ENCODE measurements at regions of chr1 and their contacts with region 1.

Region 1: DNA sequence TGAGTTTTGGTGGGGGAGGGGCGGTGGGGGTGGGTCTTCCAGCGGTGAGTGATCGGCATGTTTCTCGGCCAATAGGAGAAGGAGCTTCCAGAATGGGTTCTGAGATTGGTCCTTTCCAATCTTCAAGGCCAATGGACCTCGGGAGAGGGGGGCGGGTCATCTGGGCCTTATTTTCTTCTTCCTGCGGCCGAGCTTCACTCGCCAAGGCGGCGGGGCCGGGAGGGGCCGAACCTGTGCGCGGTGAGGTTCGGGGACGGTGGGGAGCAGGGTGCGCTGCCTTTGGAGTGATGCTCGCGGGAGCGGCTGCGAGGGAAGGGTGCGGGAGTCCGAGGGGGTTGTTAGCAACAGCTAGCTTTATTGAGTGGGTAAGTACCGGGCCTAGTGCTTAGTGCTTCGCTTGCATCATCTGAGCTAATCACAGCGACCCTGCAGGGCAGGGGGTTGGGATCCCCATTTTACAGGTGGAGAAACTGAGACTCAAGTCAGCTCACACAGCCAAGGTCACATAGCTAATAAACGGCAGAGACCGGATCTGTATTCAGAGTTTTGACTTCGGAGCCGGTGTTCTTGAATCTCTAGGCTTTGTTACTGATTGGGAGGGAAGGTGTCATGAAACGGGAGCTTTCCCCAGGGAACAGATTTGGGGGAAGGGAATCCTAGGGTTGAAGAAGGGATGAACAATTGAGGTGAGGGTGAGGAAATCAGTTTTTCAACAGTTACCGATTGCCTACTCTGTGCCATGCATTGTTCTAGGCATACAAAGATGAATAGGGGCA is 549 bp downstream of the KDM4A start:
- DNase-seq: peak in 8 of 9 donors; percentile 70 to 93 (median 90)
- ATAC-seq: peak; percentile 83
- H3K4me3 ChIP-seq: peak overlapping the region; percentile 96
- H3K4me3 Mint-ChIP-seq: peak overlapping the region; percentile 93 to 99 (median 96)
- H3K27ac ChIP-seq: peak overlapping the region; percentile 86
- H3K27ac Mint-ChIP-seq: peak overlapping the region; percentile 85 to 98 (median 95)
- H3K4me1 ChIP-seq: peaks cover 10 to 16% of the 10 kb centered on the region in 2 donors
- H3K4me1 Mint-ChIP-seq: peaks cover 27 to 47% (median 37%) of the 10 kb centered on the region in 7 donors
- H3K27me3 ChIP-seq: no peaks in the 10 kb centered on the region
- H3K27me3 Mint-ChIP-seq: peaks cover 0 to 5% (median 0%) of the 10 kb centered on the region in 5 donors

Region 2: DNA sequence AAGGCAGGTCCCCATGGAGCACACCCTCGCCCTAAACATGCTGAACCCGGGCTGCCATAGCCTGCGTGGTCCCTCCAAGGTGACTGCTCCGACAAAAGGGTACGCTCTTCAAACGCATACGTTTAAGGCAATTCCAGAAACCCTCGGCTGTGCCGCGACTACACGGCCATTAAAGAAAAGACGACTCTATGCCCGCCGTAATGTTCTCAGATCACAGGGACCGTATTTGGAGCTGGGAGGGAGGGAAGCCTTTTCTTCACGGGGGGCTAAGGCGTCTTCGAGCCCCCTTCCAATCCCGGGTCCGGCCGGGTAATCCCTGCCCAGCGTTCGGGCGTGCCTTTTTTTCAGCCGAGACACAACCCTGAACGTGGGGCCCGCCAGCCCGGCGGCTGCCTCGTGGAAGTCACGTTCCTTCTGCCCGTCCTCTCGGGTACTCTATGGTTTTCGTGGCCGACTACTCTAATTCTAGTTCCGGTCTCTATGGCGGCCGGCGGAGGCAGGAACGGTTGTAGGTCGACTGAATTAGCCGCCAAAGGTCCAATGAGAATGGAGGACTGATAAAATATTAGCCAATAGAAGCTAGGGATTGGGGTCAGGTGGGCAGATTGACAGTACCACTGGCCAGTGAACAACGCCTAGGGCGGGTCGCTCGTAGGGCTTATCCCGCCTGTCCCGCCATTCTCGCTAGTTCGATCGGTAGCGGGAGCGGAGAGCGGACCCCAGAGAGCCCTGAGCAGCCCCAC is 968.6 kb before region 1 on chr1 and contains the start of gene YBX1:
- CTCF ChIA-PET with region 1: no interaction called
- POLR2A ChIA-PET with region 1: no interaction called
- intact Hi-C with region 1: loop called in 1 of 2 experiments (anchors 2 kb)
- DNase-seq: peak; percentile 85 to 98 (median 97)
- ATAC-seq: peak; percentile 94
- H3K4me3 ChIP-seq: peak within 1 kb of the TSS; percentile 74
- H3K4me3 Mint-ChIP-seq: peak within 1 kb of the TSS; percentile 95 to 99 (median 98)
- H3K27ac ChIP-seq: peak within 1 kb of the TSS; percentile 82
- H3K27ac Mint-ChIP-seq: peak within 1 kb of the TSS; percentile 93 to 98 (median 97)
- H3K4me1 ChIP-seq: peaks cover 35 to 47% of the 10 kb centered on the region in 2 donors
- H3K4me1 Mint-ChIP-seq: peaks cover 42 to 66% (median 54%) of the 10 kb centered on the region in 7 donors
- H3K27me3 ChIP-seq: no peaks in the 10 kb centered on the region
- H3K27me3 Mint-ChIP-seq: no peaks in the 10 kb centered on the region
- total RNA-seq, gene YBX1: 277 to 471 (median 287) TPM

Region 3: GRCh38 chr1:43389326-43390313 is 260.9 kb before region 1 on chr1 and contains the starts of genes MED8 and SZT2:
- CTCF ChIA-PET with region 1: no interaction called
- POLR2A ChIA-PET with region 1: no interaction called
- intact Hi-C with region 1: loop called (anchors 1 to 10 kb)
- DNase-seq: peak; percentile 75 to 91 (median 88)
- ATAC-seq: peak; percentile 98
- H3K4me3 ChIP-seq: peak within 1 kb of the TSS; percentile 96
- H3K4me3 Mint-ChIP-seq: peak within 1 kb of the TSS; percentile 95 to 100 (median 100)
- H3K27ac ChIP-seq: peak within 1 kb of the TSS; percentile 93
- H3K27ac Mint-ChIP-seq: peak within 1 kb of the TSS; percentile 95 to 100 (median 99)
- H3K4me1 ChIP-seq: peaks cover 20 to 21% of the 10 kb centered on the region in 2 donors
- H3K4me1 Mint-ChIP-seq: peaks cover 42 to 69% (median 56%) of the 10 kb centered on the region in 7 donors
- H3K27me3 ChIP-seq: no peaks in the 10 kb centered on the region
- H3K27me3 Mint-ChIP-seq: no peaks in the 10 kb centered on the region
- total RNA-seq, gene MED8: 14.5 to 37.8 (median 30.1) TPM
- total RNA-seq, gene SZT2: 80.5 to 153 (median 131) TPM

Region 4: GRCh38 chr1:43565600-43566360 is 84.7 kb before region 1 on chr1:
- CTCF ChIA-PET with region 1: no interaction called
- POLR2A ChIA-PET with region 1: no interaction called
- intact Hi-C with region 1: loop called in 1 of 2 experiments (anchors 1 kb)
- DNase-seq: peak in 6 of 9 donors; percentile 14 to 78 (median 20)
- ATAC-seq: peak; percentile 76
- H3K4me3 ChIP-seq: peak overlapping the region; percentile 30
- H3K4me3 Mint-ChIP-seq: peak overlapping the region; percentile 56 to 80 (median 75)
- H3K27ac ChIP-seq: no peak overlapping the region
- H3K27ac Mint-ChIP-seq: no peak overlapping the region
- H3K4me1 ChIP-seq: no peaks in the 10 kb centered on the region
- H3K4me1 Mint-ChIP-seq: peaks cover 0 to 12% (median 4%) of the 10 kb centered on the region in 7 donors
- H3K27me3 ChIP-seq: no peaks in the 10 kb centered on the region
- H3K27me3 Mint-ChIP-seq: peaks cover 0 to 12% (median 8%) of the 10 kb centered on the region in 5 donors

Region 5: GRCh38 chr1:43974443-43975248 is 324.1 kb after region 1 on chr1 and contains the start of gene ATP6V0B:
- CTCF ChIA-PET with region 1: no interaction called
- POLR2A ChIA-PET with region 1: no interaction called
- intact Hi-C with region 1: loop called (anchors 1 kb)
- DNase-seq: peak; percentile 83 to 98 (median 90)
- ATAC-seq: peak; percentile 85
- H3K4me3 ChIP-seq: peak within 1 kb of the TSS; percentile 93
- H3K4me3 Mint-ChIP-seq: peak within 1 kb of the TSS; percentile 88 to 98 (median 94)
- H3K27ac ChIP-seq: peak within 1 kb of the TSS; percentile 91
- H3K27ac Mint-ChIP-seq: peak within 1 kb of the TSS; percentile 90 to 99 (median 94)
- H3K4me1 ChIP-seq: peaks cover 27 to 29% of the 10 kb centered on the region in 2 donors
- H3K4me1 Mint-ChIP-seq: peaks cover 51 to 69% (median 58%) of the 10 kb centered on the region in 7 donors
- H3K27me3 ChIP-seq: no peaks in the 10 kb centered on the region
- H3K27me3 Mint-ChIP-seq: peaks cover 0 to 5% (median 0%) of the 10 kb centered on the region in 5 donors
- total RNA-seq, gene ATP6V0B: 47.3 to 152 (median 69.3) TPM

Measured in naive thymus-derived CD4-positive, alpha-beta T cell (primary cell).